GM23248 (cell line): ENCODE measurements at regions of chr3 and their contacts with region 1.

Region 1: GRCh38 chr3:168156479-168156878 is 60.8 kb upstream of the GOLIM4 start:
- DNase-seq: no peak
- H3K4me3 ChIP-seq: no peak overlapping the region
- H3K27ac ChIP-seq: no peak overlapping the region
- H3K4me1 ChIP-seq: 0 out of 2 replicates have a peak, but pooled peaks cover 2% of the 10 kb centered on the region
- H3K27me3 ChIP-seq: no peaks in the 10 kb centered on the region

Region 2: GRCh38 chr3:168051531-168052471 is 104.7 kb before region 1 on chr3:
- in situ Hi-C with region 1: loop called (anchors 10 kb)
- DNase-seq: peak; percentile 84
- H3K4me3 ChIP-seq: peak overlapping the region; percentile 25; the same call in 1 of the 2 replicates
- H3K27ac ChIP-seq: peak overlapping the region; percentile 77
- H3K4me1 ChIP-seq: peaks cover 38% of the 10 kb centered on the region
- H3K27me3 ChIP-seq: no peaks in the 10 kb centered on the region